ENCODE measurements at regions of chr7 and their contacts with region 1.

Region 1: GRCh38 chr7:27921081-27921836 is 181.3 kb downstream of the TAX1BP1 start:
- DNase-seq: peak; percentile 52
- ATAC-seq: no peak
- H3K4me3 Mint-ChIP-seq: no peak overlapping the region
- H3K27ac Mint-ChIP-seq: no peak overlapping the region
- H3K4me1 Mint-ChIP-seq: peaks cover 6% of the 10 kb centered on the region
- H3K27me3 Mint-ChIP-seq: peaks cover 4% of the 10 kb centered on the region

Region 2: DNA sequence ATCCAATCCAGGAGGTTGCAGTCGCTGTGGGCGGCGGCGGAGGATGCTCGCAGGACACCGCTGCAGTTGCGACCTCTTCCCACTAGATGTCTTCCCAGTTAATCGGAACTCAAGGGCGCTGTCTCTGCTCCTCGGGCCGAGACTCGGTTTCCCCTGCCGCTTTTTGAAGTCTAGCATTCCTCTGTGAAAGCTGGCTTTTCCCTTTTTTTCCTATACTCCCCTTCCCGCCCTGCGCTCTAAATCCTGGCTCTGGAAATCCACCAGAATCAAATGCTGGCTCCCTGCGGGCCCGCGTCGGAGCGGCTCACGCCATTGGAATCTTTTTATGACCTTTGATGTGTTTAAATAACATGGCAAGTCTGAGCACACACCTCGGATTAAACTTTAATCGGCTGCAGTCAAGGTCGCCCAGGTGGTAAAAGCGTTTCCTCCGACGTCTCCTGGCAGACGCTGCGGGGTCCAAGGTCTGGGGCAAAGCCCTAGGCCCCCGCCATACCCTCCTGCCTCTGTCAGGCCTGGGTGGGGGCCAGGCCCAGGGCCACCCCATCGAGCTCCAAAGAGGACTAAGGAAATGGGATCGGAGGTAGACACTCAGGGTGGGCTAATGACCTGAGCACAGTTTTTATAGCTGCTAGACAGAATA is 710.7 kb before region 1 on chr7:
- CTCF ChIA-PET with region 1: interaction called, 13 read pairs
- POLR2A ChIA-PET with region 1: no interaction called
- DNase-seq: peak; percentile 60
- ATAC-seq: no peak
- H3K4me3 Mint-ChIP-seq: no peak overlapping the region
- H3K27ac Mint-ChIP-seq: no peak overlapping the region
- H3K4me1 Mint-ChIP-seq: peaks cover 9% of the 10 kb centered on the region
- H3K27me3 Mint-ChIP-seq: peaks cover 82% of the 10 kb centered on the region

Region 3: GRCh38 chr7:27745064-27745583 is 176.1 kb before region 1 on chr7:
- CTCF ChIA-PET with region 1: interaction called, 14 read pairs
- POLR2A ChIA-PET with region 1: interaction called, 7 read pairs
- DNase-seq: no peak
- ATAC-seq: no peak
- H3K4me3 Mint-ChIP-seq: no peak overlapping the region
- H3K27ac Mint-ChIP-seq: no peak overlapping the region
- H3K4me1 Mint-ChIP-seq: peaks cover 26% of the 10 kb centered on the region
- H3K27me3 Mint-ChIP-seq: no peaks in the 10 kb centered on the region

Region 4: GRCh38 chr7:27784393-27785053 is 136.7 kb before region 1 on chr7:
- CTCF ChIA-PET with region 1: interaction called, 10 read pairs
- POLR2A ChIA-PET with region 1: no interaction called
- DNase-seq: peak; percentile 26
- ATAC-seq: peak; percentile 27
- H3K4me3 Mint-ChIP-seq: no peak overlapping the region
- H3K27ac Mint-ChIP-seq: no peak overlapping the region
- H3K4me1 Mint-ChIP-seq: no peaks in the 10 kb centered on the region
- H3K27me3 Mint-ChIP-seq: no peaks in the 10 kb centered on the region

Region 5: DNA sequence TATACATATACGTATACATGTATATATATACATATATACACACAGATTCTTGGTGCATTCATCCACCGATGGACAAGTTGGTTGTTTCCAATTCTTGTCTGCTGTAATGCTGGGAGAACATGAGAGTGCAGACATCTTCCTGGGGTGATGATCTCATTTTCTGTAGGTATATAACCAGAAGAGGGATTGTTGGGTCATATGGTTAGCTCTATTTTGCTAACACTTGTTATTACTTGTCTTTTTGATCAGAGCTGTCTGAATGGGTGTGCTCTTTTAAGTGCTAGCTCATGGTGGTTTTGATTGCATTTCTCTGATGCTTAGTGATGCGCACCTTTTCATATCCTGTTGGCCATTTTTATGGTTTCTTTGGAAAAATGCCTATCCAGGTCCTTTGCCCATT is 74.9 kb before region 1 on chr7:
- CTCF ChIA-PET with region 1: no interaction called
- POLR2A ChIA-PET with region 1: no interaction called
- DNase-seq: no peak
- ATAC-seq: no peak
- H3K4me3 Mint-ChIP-seq: no peak overlapping the region
- H3K27ac Mint-ChIP-seq: no peak overlapping the region
- H3K4me1 Mint-ChIP-seq: no peaks in the 10 kb centered on the region
- H3K27me3 Mint-ChIP-seq: no peaks in the 10 kb centered on the region

Region 6: DNA sequence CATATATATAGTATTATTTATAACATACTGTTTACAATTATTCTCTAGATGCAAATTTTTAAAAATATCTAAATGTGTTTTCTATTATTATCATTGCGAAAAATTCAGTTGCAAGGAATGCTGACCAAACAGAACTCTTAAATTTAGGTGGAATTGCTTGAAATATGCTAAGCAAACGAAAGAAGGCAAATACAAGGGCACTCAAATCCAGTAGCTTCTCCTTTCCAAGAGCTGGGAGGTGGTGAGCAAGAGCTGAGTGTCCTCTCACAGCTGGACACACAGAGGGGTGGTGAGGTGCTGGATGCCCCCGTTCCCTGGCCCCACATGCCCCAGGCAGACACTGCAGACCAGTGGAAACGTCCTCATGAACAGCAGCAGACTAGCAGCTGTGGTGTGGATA is 15.3 kb before region 1 on chr7:
- CTCF ChIA-PET with region 1: interaction called, 12 read pairs
- POLR2A ChIA-PET with region 1: no interaction called
- DNase-seq: no peak
- ATAC-seq: no peak
- H3K4me3 Mint-ChIP-seq: no peak overlapping the region
- H3K27ac Mint-ChIP-seq: no peak overlapping the region
- H3K4me1 Mint-ChIP-seq: peaks cover 9% of the 10 kb centered on the region
- H3K27me3 Mint-ChIP-seq: peaks cover 12% of the 10 kb centered on the region